ENCODE measurements at regions of chr5 and their contacts with region 1.

Region 1: DNA sequence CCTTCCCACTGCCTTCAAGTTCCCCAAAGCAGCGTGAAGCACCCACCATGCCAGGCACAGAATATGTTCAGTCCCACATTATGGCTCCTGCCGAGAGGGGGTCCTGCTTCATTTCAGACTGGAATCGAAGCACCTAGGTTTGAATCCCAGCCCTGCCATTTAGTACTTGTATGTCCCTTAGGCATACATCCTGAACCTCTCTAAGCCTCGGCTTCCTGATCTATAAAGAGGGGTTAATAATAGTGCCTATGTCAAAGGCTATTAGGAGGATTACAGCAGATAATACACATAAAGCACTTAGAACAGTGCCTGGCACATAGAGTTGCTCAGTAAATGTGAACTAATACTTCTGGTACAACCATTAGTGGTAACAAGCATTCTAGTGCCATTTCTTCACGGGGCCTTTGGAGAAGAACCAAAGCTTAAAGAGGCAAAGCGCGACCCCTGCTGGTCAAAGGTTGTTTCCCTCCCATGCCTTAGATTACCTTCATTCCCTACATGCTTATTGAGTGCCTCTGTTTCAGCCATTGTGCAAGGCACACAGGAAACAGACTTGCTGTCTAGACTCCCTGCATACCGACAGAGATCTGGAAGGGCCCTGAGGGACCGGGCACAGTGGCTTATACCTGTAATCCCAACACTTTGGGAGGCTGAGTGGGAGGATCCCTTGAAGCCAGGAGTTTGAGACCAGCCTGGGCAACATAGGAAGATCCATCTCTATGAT is 98.2 kb downstream of the PPARGC1B start:
- H3K4me3 Mint-ChIP-seq: no peak overlapping the region
- H3K27ac Mint-ChIP-seq: no peak overlapping the region
- H3K4me1 Mint-ChIP-seq: peaks cover 28% of the 10 kb centered on the region
- H3K27me3 Mint-ChIP-seq: no peaks in the 10 kb centered on the region

Region 2: DNA sequence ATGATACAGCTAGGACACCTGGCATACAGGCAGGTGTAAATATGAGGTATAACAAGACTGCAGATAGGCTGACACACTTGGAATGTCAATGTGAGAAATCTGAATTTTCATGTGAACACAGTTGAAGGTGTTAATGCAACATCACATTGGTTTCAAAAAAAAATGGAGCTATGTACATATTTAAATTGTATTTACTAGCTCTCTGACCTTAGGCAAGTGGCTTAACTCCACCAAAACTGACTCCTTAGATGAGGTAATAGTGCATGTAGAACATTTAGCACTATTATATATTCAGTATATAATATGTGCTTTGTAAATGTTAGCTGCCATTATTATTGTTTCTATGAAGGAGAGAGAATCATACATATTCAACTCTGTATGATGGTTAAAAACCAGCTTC is 1222.0 kb before region 1 on chr5:
- intact Hi-C with region 1: no loop called
- H3K4me3 Mint-ChIP-seq: no peak overlapping the region
- H3K27ac Mint-ChIP-seq: no peak overlapping the region
- H3K4me1 Mint-ChIP-seq: no peaks in the 10 kb centered on the region
- H3K27me3 Mint-ChIP-seq: no peaks in the 10 kb centered on the region

Region 3: GRCh38 chr5:149636851-149637246 is 191.5 kb before region 1 on chr5:
- intact Hi-C with region 1: loop called (anchors 1 kb)
- H3K4me3 Mint-ChIP-seq: no peak overlapping the region
- H3K27ac Mint-ChIP-seq: no peak overlapping the region
- H3K4me1 Mint-ChIP-seq: peaks cover 24% of the 10 kb centered on the region
- H3K27me3 Mint-ChIP-seq: no peaks in the 10 kb centered on the region

Region 4: DNA sequence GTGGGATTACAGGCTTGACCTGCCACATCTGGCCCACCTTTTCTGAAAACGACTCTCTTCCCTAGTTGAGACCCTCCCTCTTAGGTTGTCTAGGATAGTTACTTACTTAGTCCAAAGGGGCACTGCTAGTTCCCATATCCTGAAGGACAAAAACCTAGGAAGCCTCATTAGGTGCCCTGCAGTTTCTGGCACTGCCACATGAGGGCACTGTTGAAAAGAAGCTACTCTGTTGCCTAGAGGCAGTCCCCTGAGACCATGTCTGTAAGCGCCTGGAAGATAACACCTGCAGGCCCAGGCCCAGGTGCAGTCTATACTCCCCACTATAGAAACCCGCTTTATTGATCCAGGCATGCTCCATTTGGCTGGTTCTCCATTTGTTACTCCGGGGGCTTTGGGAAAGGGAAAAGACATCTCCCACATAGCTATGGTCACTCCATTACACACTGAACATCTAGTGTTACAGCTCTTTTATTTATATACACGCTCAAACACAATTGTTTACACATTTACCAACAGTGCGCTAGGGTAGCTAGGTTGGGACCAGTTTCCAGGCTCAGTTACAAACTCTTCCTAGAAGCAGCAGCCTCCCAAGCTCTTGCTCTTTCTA is 171.6 kb before region 1 on chr5:
- intact Hi-C with region 1: loop called (anchors 1 kb)
- H3K4me3 Mint-ChIP-seq: no peak overlapping the region
- H3K27ac Mint-ChIP-seq: no peak overlapping the region
- H3K4me1 Mint-ChIP-seq: peaks cover 10% of the 10 kb centered on the region
- H3K27me3 Mint-ChIP-seq: peaks cover 1% of the 10 kb centered on the region

Region 5: DNA sequence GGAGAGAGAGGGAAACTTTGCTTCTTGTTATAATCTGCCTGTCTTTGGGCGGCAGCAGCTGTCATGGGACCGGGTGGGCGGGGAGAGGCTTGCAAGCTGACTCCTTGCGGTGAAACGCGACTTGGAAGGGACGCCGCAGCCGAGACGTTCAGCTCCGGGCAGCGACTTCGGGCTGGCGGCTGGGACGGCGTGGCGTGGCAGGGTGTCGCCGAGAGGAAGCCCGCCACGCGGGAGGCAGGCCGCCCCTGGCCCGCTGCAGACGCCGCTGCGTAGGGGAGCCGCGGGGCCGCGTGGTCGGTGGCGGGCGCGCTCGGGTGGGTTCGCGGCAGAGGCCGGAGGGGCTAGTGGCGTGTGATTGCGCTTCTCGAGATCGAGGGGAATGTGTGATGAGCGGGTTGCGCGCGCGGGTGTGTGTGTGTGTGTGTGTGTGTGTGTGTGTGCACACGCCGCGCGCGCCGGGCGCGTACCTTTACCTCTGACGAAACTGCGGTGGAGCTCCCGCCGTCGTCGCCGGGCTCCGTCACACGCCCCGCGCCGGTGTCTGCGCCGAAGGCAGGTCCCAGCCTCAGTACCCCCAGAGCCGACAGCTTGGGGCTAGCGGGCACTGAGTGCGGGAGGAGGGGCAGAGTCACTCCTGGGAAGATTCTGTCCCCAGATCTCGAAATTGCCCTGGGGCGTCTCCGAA is 96.5 kb before region 1 on chr5:
- intact Hi-C with region 1: loop called (anchors 5 kb)
- H3K4me3 Mint-ChIP-seq: peak overlapping the region; percentile 91
- H3K27ac Mint-ChIP-seq: peak overlapping the region; percentile 95
- H3K4me1 Mint-ChIP-seq: peaks cover 48% of the 10 kb centered on the region
- H3K27me3 Mint-ChIP-seq: no peaks in the 10 kb centered on the region

Region 6: DNA sequence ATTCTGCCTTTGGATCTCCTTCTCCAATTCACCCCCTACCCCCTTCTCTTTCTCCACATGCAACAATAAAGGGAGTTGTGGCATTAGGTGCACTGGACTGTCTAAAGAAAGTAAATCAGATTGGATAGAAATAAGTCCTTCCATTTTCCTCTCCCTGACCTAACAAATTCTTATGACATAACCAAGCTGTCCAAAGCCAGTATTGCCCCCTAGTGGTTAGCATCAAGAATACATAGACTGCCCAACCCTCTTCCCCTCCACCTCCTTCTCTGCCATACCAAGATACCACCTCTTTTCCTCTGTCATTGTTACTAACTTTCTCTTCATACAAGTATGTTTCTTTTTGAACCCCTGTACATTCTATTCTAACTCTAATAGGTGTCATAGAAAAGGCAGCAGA is 52.5 kb before region 1 on chr5:
- intact Hi-C with region 1: loop called (anchors 10 kb)
- H3K4me3 Mint-ChIP-seq: no peak overlapping the region
- H3K27ac Mint-ChIP-seq: no peak overlapping the region
- H3K4me1 Mint-ChIP-seq: peaks cover 92% of the 10 kb centered on the region
- H3K27me3 Mint-ChIP-seq: no peaks in the 10 kb centered on the region